CD8-positive, alpha-beta T cell (primary cell): ENCODE measurements at regions of chr1 and their contacts with region 1.

Region 1: GRCh38 chr1:235504496-235505222 is 407 bp upstream of the B3GALNT2 start:
- DNase-seq: peak; percentile 97 to 99 (median 98)
- ATAC-seq: peak; percentile 87
- H3K4me3 ChIP-seq: peak overlapping the region; percentile 81 to 85
- H3K4me3 Mint-ChIP-seq: peak overlapping the region; percentile 91
- H3K27ac ChIP-seq: peak overlapping the region; percentile 87 to 89
- H3K27ac Mint-ChIP-seq: peak overlapping the region; percentile 98
- H3K4me1 ChIP-seq: peaks cover 7% of the 10 kb centered on the region
- H3K4me1 Mint-ChIP-seq: peaks cover 26% of the 10 kb centered on the region
- H3K27me3 ChIP-seq: no peaks in the 10 kb centered on the region
- H3K27me3 Mint-ChIP-seq: no peaks in the 10 kb centered on the region
- CTCF ChIP-seq: peak; percentile 91

Region 2: GRCh38 chr1:234599617-234600417 is 904.8 kb before region 1 on chr1:
- CTCF ChIA-PET with region 1: no interaction called
- POLR2A ChIA-PET with region 1: no interaction called
- intact Hi-C with region 1: loop called in 1 of 2 experiments (anchors 5 kb)
- DNase-seq: peak; percentile 52 to 93 (median 78)
- ATAC-seq: peak; percentile 70
- H3K4me3 ChIP-seq: peak overlapping the region; percentile 47 to 54
- H3K4me3 Mint-ChIP-seq: peak overlapping the region; percentile 86
- H3K27ac ChIP-seq: peak overlapping the region; percentile 70 to 89
- H3K27ac Mint-ChIP-seq: peak overlapping the region; percentile 94
- H3K4me1 ChIP-seq: peaks cover 57% of the 10 kb centered on the region
- H3K4me1 Mint-ChIP-seq: peaks cover 55% of the 10 kb centered on the region
- H3K27me3 ChIP-seq: no peaks in the 10 kb centered on the region
- H3K27me3 Mint-ChIP-seq: no peaks in the 10 kb centered on the region
- CTCF ChIP-seq: no peak

Region 3: DNA sequence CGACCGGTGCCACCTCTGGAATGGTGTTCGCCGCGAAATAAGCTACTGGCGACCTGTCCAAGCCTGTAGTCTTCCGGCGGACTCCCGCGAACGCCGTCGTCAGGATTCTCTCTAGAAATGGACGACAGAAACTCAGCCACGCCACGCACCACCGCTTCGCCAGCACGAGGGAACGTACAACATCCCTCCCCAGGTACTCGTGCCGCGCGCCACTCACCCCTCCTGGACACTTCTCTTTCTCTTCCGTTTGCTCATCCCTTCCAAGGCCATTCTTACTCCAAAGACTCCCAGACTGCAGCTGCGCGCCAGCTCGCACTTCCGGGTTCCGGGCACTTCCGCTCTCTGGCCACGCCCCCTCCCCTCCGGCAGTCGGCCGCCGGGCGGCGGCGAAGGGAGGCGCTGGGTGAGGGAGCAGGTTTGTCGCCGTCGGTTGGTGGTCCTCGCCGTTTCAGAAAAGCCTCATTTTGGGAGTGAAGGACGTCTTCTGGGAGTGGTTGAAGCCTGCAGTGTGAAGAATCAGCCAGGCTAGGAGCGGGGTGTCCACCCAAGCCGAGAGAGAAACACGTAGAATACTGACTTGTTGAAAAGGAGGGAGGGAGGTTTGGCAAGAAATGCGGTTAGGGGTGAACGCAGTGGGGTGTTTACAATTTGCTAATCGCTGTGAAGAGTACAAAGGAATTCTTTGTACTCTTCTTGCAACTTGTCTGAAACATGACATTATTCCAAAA is 343.5 kb before region 1 on chr1 and contains the start of gene RBM34:
- CTCF ChIA-PET with region 1: no interaction called
- POLR2A ChIA-PET with region 1: interaction called, 4 read pairs
- intact Hi-C with region 1: loop called in 1 of 2 experiments (anchors 1 kb)
- DNase-seq: peak; percentile 83 to 96 (median 93)
- ATAC-seq: peak; percentile 87
- H3K4me3 ChIP-seq: peak within 1 kb of the TSS; percentile 89 to 91
- H3K4me3 Mint-ChIP-seq: peak within 1 kb of the TSS; percentile 99
- H3K27ac ChIP-seq: peak within 1 kb of the TSS; percentile 91 to 93
- H3K27ac Mint-ChIP-seq: peak within 1 kb of the TSS; percentile 100
- H3K4me1 ChIP-seq: peaks cover 40% of the 10 kb centered on the region
- H3K4me1 Mint-ChIP-seq: peaks cover 18% of the 10 kb centered on the region
- H3K27me3 ChIP-seq: no peaks in the 10 kb centered on the region
- H3K27me3 Mint-ChIP-seq: no peaks in the 10 kb centered on the region
- CTCF ChIP-seq: no peak
- total RNA-seq, gene RBM34: 243 to 267 TPM

Region 4: GRCh38 chr1:235473806-235474205 is 30.9 kb before region 1 on chr1:
- CTCF ChIA-PET with region 1: no interaction called
- POLR2A ChIA-PET with region 1: interaction called, 3 read pairs
- intact Hi-C with region 1: loop called in 1 of 2 experiments (anchors 1 kb)
- DNase-seq: no peak
- ATAC-seq: no peak
- H3K4me3 ChIP-seq: no peak overlapping the region
- H3K4me3 Mint-ChIP-seq: no peak overlapping the region
- H3K27ac ChIP-seq: no peak overlapping the region
- H3K27ac Mint-ChIP-seq: no peak overlapping the region
- H3K4me1 ChIP-seq: no peaks in the 10 kb centered on the region
- H3K4me1 Mint-ChIP-seq: no peaks in the 10 kb centered on the region
- H3K27me3 ChIP-seq: no peaks in the 10 kb centered on the region
- H3K27me3 Mint-ChIP-seq: no peaks in the 10 kb centered on the region
- CTCF ChIP-seq: no peak

Region 5: GRCh38 chr1:235557495-235557894 is 52.8 kb after region 1 on chr1:
- CTCF ChIA-PET with region 1: no interaction called
- POLR2A ChIA-PET with region 1: no interaction called
- intact Hi-C with region 1: no loop called
- DNase-seq: peak in 1 of 9 experiments; percentile 6
- ATAC-seq: no peak
- H3K4me3 ChIP-seq: no peak overlapping the region
- H3K4me3 Mint-ChIP-seq: no peak overlapping the region
- H3K27ac ChIP-seq: no peak overlapping the region
- H3K27ac Mint-ChIP-seq: no peak overlapping the region
- H3K4me1 ChIP-seq: no peaks in the 10 kb centered on the region
- H3K4me1 Mint-ChIP-seq: no peaks in the 10 kb centered on the region
- H3K27me3 ChIP-seq: no peaks in the 10 kb centered on the region
- H3K27me3 Mint-ChIP-seq: no peaks in the 10 kb centered on the region
- CTCF ChIP-seq: no peak

Region 6: GRCh38 chr1:235758931-235759330 is 254.3 kb after region 1 on chr1:
- CTCF ChIA-PET with region 1: no interaction called
- POLR2A ChIA-PET with region 1: no interaction called
- intact Hi-C with region 1: no loop called
- DNase-seq: no peak
- ATAC-seq: no peak
- H3K4me3 ChIP-seq: no peak overlapping the region
- H3K4me3 Mint-ChIP-seq: no peak overlapping the region
- H3K27ac ChIP-seq: no peak overlapping the region
- H3K27ac Mint-ChIP-seq: no peak overlapping the region
- H3K4me1 ChIP-seq: no peaks in the 10 kb centered on the region
- H3K4me1 Mint-ChIP-seq: no peaks in the 10 kb centered on the region
- H3K27me3 ChIP-seq: no peaks in the 10 kb centered on the region
- H3K27me3 Mint-ChIP-seq: no peaks in the 10 kb centered on the region
- CTCF ChIP-seq: no peak

Region 7: DNA sequence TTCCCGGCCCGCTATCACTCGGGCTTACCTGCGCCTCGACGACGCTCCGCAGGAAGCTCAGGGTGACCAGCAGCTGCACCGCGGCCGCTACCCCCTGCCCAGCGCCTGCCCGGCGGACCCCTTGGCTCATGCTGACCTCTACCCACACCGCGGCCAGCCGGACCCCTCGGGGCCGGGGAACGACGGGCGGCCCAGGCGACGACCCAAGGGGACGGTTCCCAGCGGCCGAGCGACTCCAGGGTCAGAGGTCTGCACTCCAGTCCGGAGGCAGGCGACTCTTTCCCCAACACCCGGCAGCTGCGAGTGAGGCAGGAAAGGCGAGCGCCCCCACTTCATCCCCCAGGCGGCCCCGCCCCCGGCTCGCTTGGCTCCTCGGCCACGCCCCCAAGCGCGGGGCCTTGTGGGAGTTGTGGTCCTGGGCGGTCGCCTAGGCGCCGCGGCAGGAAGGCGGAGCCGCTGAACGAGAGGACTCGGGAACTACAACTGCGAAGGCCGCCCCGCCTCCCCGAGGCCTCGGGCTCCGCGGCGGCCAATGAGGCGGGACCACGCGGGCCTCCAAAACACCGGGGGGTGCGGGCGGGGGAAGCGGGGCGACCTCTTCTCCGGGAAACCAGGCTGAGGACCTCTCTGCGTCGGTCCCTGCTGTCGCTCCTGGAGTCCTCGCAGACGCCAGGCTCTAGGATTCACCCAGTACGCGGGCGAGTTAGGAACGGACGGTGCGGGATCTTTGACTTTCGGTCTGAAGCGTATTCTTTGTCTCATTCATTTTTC is 777.2 kb after region 1 on chr1 and contains the start of gene ERO1B:
- CTCF ChIA-PET with region 1: no interaction called
- POLR2A ChIA-PET with region 1: no interaction called
- intact Hi-C with region 1: loop called (anchors 5 to 10 kb)
- DNase-seq: peak; percentile 96 to 99 (median 97)
- ATAC-seq: peak; percentile 93
- H3K4me3 ChIP-seq: peak within 1 kb of the TSS; percentile 75 to 90
- H3K4me3 Mint-ChIP-seq: peak within 1 kb of the TSS; percentile 97
- H3K27ac ChIP-seq: peak within 1 kb of the TSS; percentile 72 to 85
- H3K27ac Mint-ChIP-seq: peak within 1 kb of the TSS; percentile 92
- H3K4me1 ChIP-seq: peaks cover 28% of the 10 kb centered on the region
- H3K4me1 Mint-ChIP-seq: peaks cover 52% of the 10 kb centered on the region
- H3K27me3 ChIP-seq: no peaks in the 10 kb centered on the region
- H3K27me3 Mint-ChIP-seq: no peaks in the 10 kb centered on the region
- CTCF ChIP-seq: no peak
- total RNA-seq, gene ERO1B: 16.2 to 16.6 TPM